ENCODE measurements at regions of chr9 and their contacts with region 1.

Region 1: GRCh38 chr9:30519756-30520155 is 1864.7 kb upstream of the ACO1 start:
- DNase-seq: no peak
- ATAC-seq: no peak
- H3K4me3 Mint-ChIP-seq: no peak overlapping the region
- H3K27ac Mint-ChIP-seq: no peak overlapping the region
- H3K4me1 Mint-ChIP-seq: no peaks in the 10 kb centered on the region
- H3K27me3 Mint-ChIP-seq: no peaks in the 10 kb centered on the region
- CTCF ChIP-seq: no peak

Region 2: GRCh38 chr9:30459156-30459555 is 60.6 kb before region 1 on chr9:
- CTCF ChIA-PET with region 1: no interaction called
- POLR2A ChIA-PET with region 1: no interaction called
- intact Hi-C with region 1: loop called (anchors 10 kb)
- DNase-seq: no peak
- ATAC-seq: no peak
- H3K4me3 Mint-ChIP-seq: no peak overlapping the region
- H3K27ac Mint-ChIP-seq: no peak overlapping the region
- H3K4me1 Mint-ChIP-seq: no peaks in the 10 kb centered on the region
- H3K27me3 Mint-ChIP-seq: no peaks in the 10 kb centered on the region
- CTCF ChIP-seq: no peak

Region 3: DNA sequence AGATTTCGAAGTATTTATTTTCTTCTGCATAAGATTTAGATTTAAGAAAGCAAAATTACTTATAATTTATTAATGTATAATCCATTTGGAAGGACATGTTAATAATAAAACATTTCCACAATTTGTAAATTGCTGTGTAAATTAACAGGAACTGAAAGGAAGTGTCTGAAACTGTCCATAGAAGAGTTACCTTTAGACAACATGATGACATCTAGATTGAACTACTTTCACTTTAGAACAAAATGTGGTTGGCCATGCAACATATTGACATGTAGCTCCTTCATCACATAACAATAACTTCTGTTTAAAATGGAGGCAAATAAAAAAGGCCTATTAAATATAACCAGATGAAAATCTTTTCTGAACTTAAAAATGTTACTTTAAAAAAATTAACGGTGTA is 15.1 kb after region 1 on chr9:
- CTCF ChIA-PET with region 1: no interaction called
- POLR2A ChIA-PET with region 1: no interaction called
- intact Hi-C with region 1: no loop called
- DNase-seq: no peak
- ATAC-seq: no peak
- H3K4me3 Mint-ChIP-seq: no peak overlapping the region
- H3K27ac Mint-ChIP-seq: no peak overlapping the region
- H3K4me1 Mint-ChIP-seq: no peaks in the 10 kb centered on the region
- H3K27me3 Mint-ChIP-seq: no peaks in the 10 kb centered on the region
- CTCF ChIP-seq: no peak

Region 4: DNA sequence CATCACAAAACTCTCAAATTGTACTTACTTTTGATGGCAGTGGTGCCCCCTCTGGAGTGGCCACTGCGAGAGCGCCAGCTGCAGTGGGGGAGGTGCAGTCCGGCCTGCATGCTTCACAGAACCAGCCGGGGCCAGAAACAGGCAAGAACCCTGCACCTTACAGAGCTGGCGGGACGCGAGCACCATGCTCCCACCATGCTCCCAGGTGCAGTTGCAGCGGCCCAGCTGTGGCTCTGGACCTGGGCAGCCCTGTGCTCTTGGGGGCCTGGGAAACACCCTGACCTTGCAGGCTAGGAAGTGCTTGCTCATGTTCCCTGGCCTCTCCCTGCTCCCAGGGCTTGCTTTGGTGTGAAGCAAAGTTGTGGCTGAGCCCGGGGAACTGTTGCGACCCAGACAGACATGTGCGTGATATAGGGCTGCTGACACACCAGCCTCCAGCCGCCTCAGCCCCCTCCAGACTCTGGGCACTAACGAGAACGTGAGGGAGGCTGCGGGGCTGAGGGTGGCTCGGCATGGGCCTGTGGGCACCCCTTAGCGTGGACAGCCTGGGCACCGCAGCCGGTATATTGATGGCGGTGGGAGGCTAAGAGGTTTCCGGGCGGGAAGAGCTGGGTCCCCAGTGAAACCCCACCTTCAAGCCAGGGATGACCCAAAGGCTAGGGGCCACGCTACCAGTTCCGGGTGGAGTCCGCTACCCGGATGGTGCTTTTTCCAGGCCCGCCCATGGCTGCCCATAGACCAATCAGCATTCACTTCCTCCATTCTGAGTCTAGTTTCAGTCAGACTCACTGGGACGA is 54.8 kb after region 1 on chr9:
- CTCF ChIA-PET with region 1: no interaction called
- POLR2A ChIA-PET with region 1: no interaction called
- intact Hi-C with region 1: no loop called
- DNase-seq: no peak
- ATAC-seq: no peak
- H3K4me3 Mint-ChIP-seq: no peak overlapping the region
- H3K27ac Mint-ChIP-seq: no peak overlapping the region
- H3K4me1 Mint-ChIP-seq: no peaks in the 10 kb centered on the region
- H3K27me3 Mint-ChIP-seq: no peaks in the 10 kb centered on the region
- CTCF ChIP-seq: no peak